ENCODE measurements at regions of chr1 and their contacts with region 1.

Region 1: GRCh38 chr1:198681831-198682759 is 43.3 kb downstream of the PTPRC start:
- DNase-seq: peak; percentile 42
- ATAC-seq: peak; percentile 73
- H3K4me3 Mint-ChIP-seq: peak overlapping the region; percentile 63
- H3K27ac Mint-ChIP-seq: peak overlapping the region; percentile 88
- H3K4me1 Mint-ChIP-seq: peaks cover 92% of the 10 kb centered on the region
- H3K27me3 Mint-ChIP-seq: no peaks in the 10 kb centered on the region
- CTCF ChIP-seq: no peak

Region 2: DNA sequence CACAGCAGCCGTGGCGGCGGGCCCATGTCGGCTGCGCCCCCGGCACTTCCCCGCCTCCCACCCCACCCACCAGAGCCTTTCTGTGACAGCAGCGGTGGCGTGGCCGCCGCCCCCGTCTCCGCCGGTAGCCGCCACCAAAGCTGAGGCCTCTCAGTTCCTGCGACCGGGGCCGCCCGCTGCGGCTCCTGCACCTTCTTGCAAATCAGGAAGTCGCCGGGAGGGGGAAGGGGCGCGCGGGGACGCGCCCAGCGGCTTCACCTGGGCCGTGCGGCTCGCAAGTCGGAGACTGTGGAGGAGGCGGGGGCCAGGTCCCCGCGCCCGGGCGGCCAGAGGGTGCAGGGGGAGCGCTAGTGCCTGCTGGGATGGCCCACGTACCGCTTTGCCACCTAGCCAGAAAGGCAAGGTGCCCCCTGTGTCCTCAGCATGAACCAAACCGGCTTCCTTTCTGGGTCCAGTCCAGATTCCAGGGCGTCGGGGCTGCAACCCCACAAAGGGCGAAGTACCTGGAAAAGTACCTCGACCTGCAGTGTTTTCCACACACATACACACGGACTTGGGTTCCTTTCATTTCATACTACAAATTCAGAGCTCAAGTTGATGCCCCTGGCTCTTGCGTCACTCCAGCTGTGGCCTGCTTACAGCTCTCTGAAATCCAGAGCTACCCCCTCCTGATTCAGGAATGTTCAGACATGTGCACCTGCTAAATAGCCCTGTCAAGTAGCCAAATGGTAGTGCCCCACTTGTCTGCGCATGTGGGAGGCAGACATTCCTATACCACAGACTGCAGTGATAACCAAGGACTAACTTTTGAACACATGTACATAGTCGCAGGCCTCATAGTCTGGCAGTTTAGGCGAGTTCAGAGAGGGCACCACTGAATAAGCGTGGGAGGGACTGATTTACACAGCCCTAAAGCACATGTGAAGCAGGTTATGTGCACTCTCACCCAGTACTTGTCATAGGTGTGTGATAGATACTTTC is 906.5 kb before region 1 on chr1 and contains the start of gene DENND1B:
- CTCF ChIA-PET with region 1: no interaction called
- POLR2A ChIA-PET with region 1: interaction called, 3 read pairs
- intact Hi-C with region 1: loop called (anchors 5 kb)
- DNase-seq: peak; percentile 81
- ATAC-seq: peak; percentile 72
- H3K4me3 Mint-ChIP-seq: peak within 1 kb of the TSS; percentile 87
- H3K27ac Mint-ChIP-seq: peak within 1 kb of the TSS; percentile 96
- H3K4me1 Mint-ChIP-seq: peaks cover 69% of the 10 kb centered on the region
- H3K27me3 Mint-ChIP-seq: no peaks in the 10 kb centered on the region
- CTCF ChIP-seq: no peak
- total RNA-seq, gene DENND1B: 15.5 and 19.2 TPM in 2 replicates

Region 3: GRCh38 chr1:198359024-198359653 is 323.0 kb before region 1 on chr1:
- CTCF ChIA-PET with region 1: no interaction called
- POLR2A ChIA-PET with region 1: no interaction called
- intact Hi-C with region 1: loop called (anchors 10 kb)
- DNase-seq: no peak
- ATAC-seq: no peak
- H3K4me3 Mint-ChIP-seq: no peak overlapping the region
- H3K27ac Mint-ChIP-seq: no peak overlapping the region
- H3K4me1 Mint-ChIP-seq: no peaks in the 10 kb centered on the region
- H3K27me3 Mint-ChIP-seq: peaks cover 11% of the 10 kb centered on the region
- CTCF ChIP-seq: no peak

Region 4: DNA sequence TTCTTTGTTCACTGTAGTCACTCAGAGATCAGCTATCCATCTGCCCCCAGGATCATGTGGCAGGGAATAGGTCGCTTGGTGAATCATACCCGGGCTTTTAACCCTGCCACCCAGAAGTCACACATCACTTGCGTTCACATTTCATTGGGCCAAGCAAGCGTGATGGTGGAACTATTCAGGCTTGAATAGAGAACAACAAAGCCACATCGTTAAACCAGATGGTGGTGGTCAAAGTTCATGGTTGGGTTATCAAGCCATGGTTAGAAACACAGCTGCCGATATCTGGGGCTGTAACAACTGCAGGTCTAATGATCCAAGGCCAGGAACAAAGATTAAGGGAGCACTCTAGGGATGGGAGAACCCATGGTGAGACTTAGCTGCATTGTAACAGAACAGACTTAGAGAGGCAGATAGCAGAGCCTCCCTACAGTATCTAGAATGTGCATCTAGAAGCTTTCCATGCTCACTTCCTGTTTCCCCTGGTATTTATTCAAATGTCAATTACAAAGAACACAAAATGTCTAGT is 83.2 kb before region 1 on chr1:
- CTCF ChIA-PET with region 1: interaction called, 10 read pairs
- POLR2A ChIA-PET with region 1: interaction called, 34 read pairs
- intact Hi-C with region 1: loop called (anchors 1 kb)
- DNase-seq: peak; percentile 40
- ATAC-seq: peak; percentile 76
- H3K4me3 Mint-ChIP-seq: peak overlapping the region; percentile 90
- H3K27ac Mint-ChIP-seq: peak overlapping the region; percentile 99
- H3K4me1 Mint-ChIP-seq: peaks cover 90% of the 10 kb centered on the region
- H3K27me3 Mint-ChIP-seq: no peaks in the 10 kb centered on the region
- CTCF ChIP-seq: no peak

Region 5: GRCh38 chr1:198651650-198652400 is 30.3 kb before region 1 on chr1:
- CTCF ChIA-PET with region 1: interaction called, 4 read pairs
- POLR2A ChIA-PET with region 1: interaction called, 27 read pairs
- intact Hi-C with region 1: loop called (anchors 1 kb)
- DNase-seq: no peak
- ATAC-seq: peak; percentile 69
- H3K4me3 Mint-ChIP-seq: peak overlapping the region; percentile 68
- H3K27ac Mint-ChIP-seq: peak overlapping the region; percentile 90
- H3K4me1 Mint-ChIP-seq: peaks cover 83% of the 10 kb centered on the region
- H3K27me3 Mint-ChIP-seq: no peaks in the 10 kb centered on the region
- CTCF ChIP-seq: no peak

Region 6: DNA sequence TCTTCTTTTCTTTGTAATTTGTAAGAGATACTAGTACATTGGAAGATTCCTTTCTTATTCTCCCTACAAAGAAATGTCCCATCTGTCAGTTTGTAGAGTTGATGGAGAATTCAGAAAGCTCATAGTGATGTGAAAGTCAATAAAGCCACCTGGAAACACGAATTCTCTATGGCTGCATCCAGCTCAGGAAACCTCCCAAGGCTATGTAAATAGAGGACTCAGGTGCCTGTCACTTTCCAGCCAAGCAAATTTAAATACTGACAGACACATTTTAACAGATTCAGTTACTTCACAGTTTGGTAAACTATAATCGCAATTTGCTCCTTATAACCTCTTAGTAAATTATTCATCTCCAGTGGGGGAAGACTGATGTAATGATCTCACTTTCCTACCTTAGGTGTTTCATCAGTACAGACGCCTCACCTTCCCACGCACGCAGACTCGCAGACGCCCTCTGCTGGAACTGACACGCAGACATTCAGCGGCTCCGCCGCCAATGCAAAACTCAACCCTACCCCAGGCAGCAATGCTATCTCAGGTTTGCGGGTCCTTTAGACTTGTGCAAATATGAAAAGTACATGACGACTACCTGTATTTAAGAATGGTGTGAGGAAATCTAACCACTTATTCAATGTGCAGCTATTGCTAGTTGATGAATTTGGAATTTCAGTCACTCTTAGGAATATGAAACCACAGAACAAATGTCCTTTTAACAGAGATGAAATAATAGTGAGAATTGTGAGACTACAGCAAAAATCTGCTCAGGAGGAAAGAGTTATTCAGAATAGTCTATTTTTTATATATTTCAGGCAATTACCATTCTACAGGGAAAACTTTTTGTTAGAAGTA is 17.3 kb after region 1 on chr1:
- CTCF ChIA-PET with region 1: interaction called, 7 read pairs
- POLR2A ChIA-PET with region 1: interaction called, 8 read pairs
- intact Hi-C with region 1: loop called (anchors 1 kb)
- DNase-seq: no peak
- ATAC-seq: no peak
- H3K4me3 Mint-ChIP-seq: no peak overlapping the region
- H3K27ac Mint-ChIP-seq: peak overlapping the region; percentile 64
- H3K4me1 Mint-ChIP-seq: peaks cover 69% of the 10 kb centered on the region
- H3K27me3 Mint-ChIP-seq: no peaks in the 10 kb centered on the region
- CTCF ChIP-seq: no peak

Measured in activated B cell treated with CpG ODN at 0.5 μM for 24 hours (primary cell).